ENCODE measurements at regions of chr15 and their contacts with region 1.

Region 1: DNA sequence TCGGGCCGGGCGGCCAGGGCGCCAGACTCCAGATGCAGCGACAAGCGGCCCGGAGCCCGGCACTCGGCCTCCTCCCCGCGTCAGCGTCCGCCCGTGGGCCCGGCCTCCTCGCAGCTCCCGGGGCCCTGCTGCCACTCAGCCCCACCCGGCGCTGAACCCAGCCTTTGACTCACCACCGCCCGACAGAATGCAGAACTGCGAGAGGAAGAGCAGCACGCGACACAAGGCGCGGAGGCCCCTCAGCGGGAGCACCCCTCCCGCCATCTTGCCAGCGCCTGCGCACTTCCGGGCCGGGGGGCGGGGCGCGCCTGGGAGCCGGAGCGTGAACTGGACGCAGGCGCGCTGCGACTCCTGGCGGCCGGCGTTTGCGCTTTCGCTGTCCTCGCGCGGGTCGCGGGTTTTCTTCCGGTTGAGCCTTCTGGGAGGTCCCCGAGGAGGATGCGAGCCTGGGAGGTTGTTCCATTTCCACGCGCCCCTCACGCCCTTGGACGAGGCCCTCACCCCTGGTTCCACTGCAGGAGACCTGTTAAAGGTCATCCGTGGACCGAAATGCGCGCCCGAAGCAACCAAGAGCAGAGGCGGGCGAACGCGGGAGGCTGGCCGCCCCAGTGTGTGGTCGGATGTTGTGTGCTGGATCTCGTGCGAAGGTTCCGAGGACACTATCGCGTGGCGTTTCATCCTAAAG is at the start of gene TM2D3:
- DNase-seq: peak; percentile 92 to 98 (median 96)
- ATAC-seq: peak; percentile 96
- H3K4me3 ChIP-seq: peak within 1 kb of the TSS; percentile 99
- H3K4me3 Mint-ChIP-seq: peak within 1 kb of the TSS; percentile 88 to 95 (median 94)
- H3K27ac ChIP-seq: peak within 1 kb of the TSS; percentile 91
- H3K27ac Mint-ChIP-seq: peak within 1 kb of the TSS; percentile 87 to 98 (median 96)
- H3K4me1 ChIP-seq: peaks cover 19 to 26% of the 10 kb centered on the region in 2 donors
- H3K4me1 Mint-ChIP-seq: peaks cover 16 to 53% (median 35%) of the 10 kb centered on the region in 7 donors
- H3K27me3 ChIP-seq: no peaks in the 10 kb centered on the region
- H3K27me3 Mint-ChIP-seq: no peaks in the 10 kb centered on the region
- total RNA-seq, gene TM2D3: 54.4 to 105 (median 87.9) TPM

Region 2: DNA sequence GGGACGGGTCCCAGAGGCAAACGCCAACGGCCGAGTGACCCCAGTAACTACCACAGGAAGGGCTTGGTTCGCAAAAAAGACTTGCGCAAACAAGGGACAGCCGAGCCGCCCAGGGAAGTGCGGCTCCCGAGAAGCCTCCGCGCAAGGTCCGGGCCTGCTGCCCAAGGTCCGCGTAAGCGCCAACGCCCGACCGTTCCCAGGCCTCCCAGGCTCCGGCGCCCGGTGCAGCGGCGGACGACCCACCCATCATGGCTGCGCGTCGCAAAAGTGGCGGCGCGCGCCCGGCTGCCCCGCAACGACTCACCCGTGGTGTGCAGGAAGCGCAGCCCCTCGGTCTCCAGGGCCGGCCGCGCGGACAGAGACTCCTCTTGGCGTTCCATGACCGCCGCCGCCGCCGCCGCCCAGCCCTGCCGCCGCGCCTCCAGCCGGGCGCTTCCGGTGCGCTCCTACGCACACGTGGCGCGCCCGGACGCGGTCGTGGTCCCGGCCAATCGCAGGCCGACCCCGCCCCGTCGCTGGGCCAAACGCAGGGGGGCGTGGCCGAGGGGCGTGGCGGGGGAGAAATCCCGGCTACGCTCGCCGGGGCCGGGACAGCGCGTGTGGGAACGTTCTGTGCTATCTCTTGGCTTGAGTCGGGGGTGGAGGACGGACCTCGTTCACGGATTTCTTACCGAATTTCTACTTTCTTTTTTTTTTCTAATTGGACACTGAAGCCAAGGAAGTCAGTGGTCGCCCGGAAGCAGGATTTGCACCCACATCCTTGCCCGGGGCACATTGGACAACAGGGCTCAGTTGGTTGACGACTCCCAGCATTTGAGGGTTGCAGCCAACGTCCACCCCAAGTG is 375.0 kb before region 1 on chr15 and contains the start of gene SELENOS:
- CTCF ChIA-PET with region 1: no interaction called
- POLR2A ChIA-PET with region 1: no interaction called
- intact Hi-C with region 1: loop called in 1 of 2 experiments (anchors 1 kb)
- DNase-seq: peak; percentile 74 to 98 (median 84)
- ATAC-seq: peak; percentile 99
- H3K4me3 ChIP-seq: peak within 1 kb of the TSS; percentile 92
- H3K4me3 Mint-ChIP-seq: peak within 1 kb of the TSS; percentile 86 to 99 (median 95)
- H3K27ac ChIP-seq: peak within 1 kb of the TSS; percentile 88
- H3K27ac Mint-ChIP-seq: peak within 1 kb of the TSS; percentile 80 to 96 (median 91)
- H3K4me1 ChIP-seq: peaks cover 11 to 21% of the 10 kb centered on the region in 2 donors
- H3K4me1 Mint-ChIP-seq: peaks cover 13 to 37% (median 24%) of the 10 kb centered on the region in 7 donors
- H3K27me3 ChIP-seq: no peaks in the 10 kb centered on the region
- H3K27me3 Mint-ChIP-seq: no peaks in the 10 kb centered on the region
- total RNA-seq, gene SELENOS: 24.8 to 42.2 (median 37.6) TPM

Region 3: GRCh38 chr15:101333401-101333800 is 318.8 kb before region 1 on chr15:
- CTCF ChIA-PET with region 1: no interaction called
- POLR2A ChIA-PET with region 1: no interaction called
- intact Hi-C with region 1: loop called (anchors 1 kb)
- DNase-seq: no peak
- ATAC-seq: no peak
- H3K4me3 ChIP-seq: peak overlapping the region; percentile 14
- H3K4me3 Mint-ChIP-seq: peak overlapping the region in 3 of 10 donors; percentile 28 to 67 (median 38)
- H3K27ac ChIP-seq: peak overlapping the region; percentile 47
- H3K27ac Mint-ChIP-seq: peak overlapping the region in 8 of 9 donors; percentile 74 to 97 (median 90)
- H3K4me1 ChIP-seq: peaks cover 14 to 18% of the 10 kb centered on the region in 2 donors
- H3K4me1 Mint-ChIP-seq: peaks cover 0 to 28% (median 24%) of the 10 kb centered on the region in 7 donors
- H3K27me3 ChIP-seq: no peaks in the 10 kb centered on the region
- H3K27me3 Mint-ChIP-seq: peaks cover 0 to 8% (median 6%) of the 10 kb centered on the region in 5 donors

Region 4: GRCh38 chr15:101697488-101697887 is 45.2 kb after region 1 on chr15:
- CTCF ChIA-PET with region 1: no interaction called
- POLR2A ChIA-PET with region 1: no interaction called
- intact Hi-C with region 1: loop called in 1 of 2 experiments (anchors 1 kb)
- DNase-seq: peak in 7 of 9 donors; percentile 15 to 58 (median 27)
- ATAC-seq: peak; percentile 77
- H3K4me3 ChIP-seq: no peak overlapping the region
- H3K4me3 Mint-ChIP-seq: peak overlapping the region; percentile 70 to 87 (median 75)
- H3K27ac ChIP-seq: peak overlapping the region; percentile 61
- H3K27ac Mint-ChIP-seq: peak overlapping the region; percentile 80 to 99 (median 91)
- H3K4me1 ChIP-seq: peaks cover 0 to 18% of the 10 kb centered on the region in 2 donors
- H3K4me1 Mint-ChIP-seq: peaks cover 16 to 62% (median 44%) of the 10 kb centered on the region in 7 donors
- H3K27me3 ChIP-seq: no peaks in the 10 kb centered on the region
- H3K27me3 Mint-ChIP-seq: no peaks in the 10 kb centered on the region